Activated CD4-positive, alpha-beta T cell treated with anti-CD3 and anti-CD28 coated beads, Interleukin-2, amount 10 ng/mL, durations not matched to agents 7 days and 5 days (primary cell): ENCODE measurements at regions of chr1 and their contacts with region 1.

Region 1: DNA sequence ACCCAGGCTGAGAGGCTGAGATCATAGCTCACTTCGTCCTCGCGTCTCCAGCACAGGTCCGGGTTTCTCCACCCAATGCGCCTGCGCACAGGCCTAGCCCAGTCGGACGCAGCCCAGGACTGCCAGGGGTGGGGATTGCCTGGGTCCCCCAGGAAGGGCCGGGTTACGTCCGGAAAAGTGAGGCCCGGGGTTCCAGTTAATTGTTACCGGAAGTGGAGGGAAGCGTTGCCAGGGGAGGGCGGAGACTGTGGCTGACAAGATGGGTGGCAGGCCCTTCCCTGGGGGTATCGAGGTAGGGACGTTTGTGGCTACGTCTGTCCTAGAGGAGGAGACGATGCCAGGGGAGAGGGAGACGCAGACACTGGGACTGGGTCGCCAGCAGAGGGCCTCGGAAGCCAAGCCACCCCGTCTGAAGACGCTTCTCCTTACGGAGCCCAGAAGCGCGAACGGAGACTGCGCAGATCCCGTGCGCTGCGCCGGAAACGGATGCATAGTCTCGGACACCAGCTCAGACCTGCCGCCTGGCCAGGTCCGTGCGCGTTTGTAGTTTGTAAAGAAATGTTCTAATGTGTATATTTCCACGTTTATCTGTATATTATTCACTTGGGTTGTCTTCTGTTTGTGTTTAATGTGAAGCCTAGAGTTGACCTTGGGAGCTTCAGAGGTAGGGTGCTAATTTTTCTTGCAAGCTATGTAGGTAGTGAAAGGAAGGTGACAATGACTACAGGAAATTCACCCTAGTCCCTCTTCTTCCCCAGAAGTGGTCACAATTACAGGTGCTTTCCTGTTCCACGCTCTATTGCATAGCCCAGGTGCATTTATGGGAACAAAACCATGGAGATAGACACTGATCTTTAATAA is 7.3 kb downstream of the RSRP1 start:
- DNase-seq: peak; percentile 89
- H3K4me3 Mint-ChIP-seq: peak overlapping the region; percentile 81
- H3K27ac Mint-ChIP-seq: peak overlapping the region; percentile 95
- H3K4me1 Mint-ChIP-seq: peaks cover 60% of the 10 kb centered on the region
- H3K27me3 Mint-ChIP-seq: no peaks in the 10 kb centered on the region

Region 2: GRCh38 chr1:25167331-25168199 is 72.3 kb before region 1 on chr1:
- CTCF ChIA-PET with region 1: no interaction called
- POLR2A ChIA-PET with region 1: no interaction called
- DNase-seq: no peak
- H3K4me3 Mint-ChIP-seq: no peak overlapping the region
- H3K27ac Mint-ChIP-seq: no peak overlapping the region
- H3K4me1 Mint-ChIP-seq: no peaks in the 10 kb centered on the region
- H3K27me3 Mint-ChIP-seq: peaks cover 13% of the 10 kb centered on the region

Region 3: DNA sequence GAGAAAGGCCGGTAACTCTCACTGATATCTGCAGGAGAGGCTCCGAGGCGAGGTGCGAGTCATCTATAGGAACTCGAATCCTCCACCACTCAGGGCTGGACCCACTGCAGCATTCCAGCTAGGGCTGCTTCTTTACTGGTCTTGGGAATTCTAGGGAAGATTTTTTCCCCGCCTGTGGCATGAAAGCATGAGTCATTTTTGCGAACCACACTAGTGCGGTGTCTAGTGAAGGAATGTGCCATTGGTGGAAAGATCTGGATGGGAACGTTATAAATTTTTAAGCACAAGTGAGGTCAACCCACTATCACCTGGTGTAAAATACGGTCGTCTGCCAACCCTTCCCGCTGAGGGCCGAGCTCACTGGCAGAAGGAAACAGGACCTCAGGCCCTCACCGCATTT is 57.3 kb before region 1 on chr1:
- CTCF ChIA-PET with region 1: no interaction called
- POLR2A ChIA-PET with region 1: no interaction called
- DNase-seq: no peak
- H3K4me3 Mint-ChIP-seq: no peak overlapping the region
- H3K27ac Mint-ChIP-seq: no peak overlapping the region
- H3K4me1 Mint-ChIP-seq: no peaks in the 10 kb centered on the region
- H3K27me3 Mint-ChIP-seq: peaks cover 2% of the 10 kb centered on the region

Region 4: DNA sequence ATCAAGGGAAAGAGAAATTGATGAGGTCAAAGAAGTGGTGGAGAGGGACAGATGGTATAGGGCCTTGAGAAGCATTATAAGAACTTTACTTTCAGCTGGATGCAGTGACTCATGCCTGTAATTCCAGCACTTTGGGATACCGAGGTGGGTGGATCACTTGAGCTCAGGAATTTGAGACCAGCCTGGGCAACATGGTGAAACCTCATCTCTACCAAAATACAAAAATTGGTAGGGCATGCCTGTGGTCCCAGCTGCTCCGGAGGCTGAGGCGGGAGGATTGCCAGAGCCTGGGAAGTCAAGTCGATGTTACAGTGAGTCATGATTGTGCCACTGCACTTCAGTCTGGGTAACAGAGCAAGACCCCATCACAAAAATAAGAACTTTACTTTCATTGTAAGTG is 104.0 kb after region 1 on chr1:
- CTCF ChIA-PET with region 1: interaction called, 10 read pairs
- POLR2A ChIA-PET with region 1: interaction called, 3 read pairs
- DNase-seq: no peak
- H3K4me3 Mint-ChIP-seq: no peak overlapping the region
- H3K27ac Mint-ChIP-seq: no peak overlapping the region
- H3K4me1 Mint-ChIP-seq: peaks cover 44% of the 10 kb centered on the region
- H3K27me3 Mint-ChIP-seq: no peaks in the 10 kb centered on the region